PC-3 (cell line): ENCODE measurements at regions of chr4 and their contacts with region 1.

Region 1: GRCh38 chr4:185965426-185966384 is 103.3 kb upstream of the TLR3 start:
- DNase-seq: no peak
- ATAC-seq: no peak
- H3K4me3 ChIP-seq: no peak overlapping the region
- H3K27ac ChIP-seq: no peak overlapping the region
- H3K4me1 ChIP-seq: peaks cover 12% of the 10 kb centered on the region
- H3K27me3 ChIP-seq: no peaks in the 10 kb centered on the region
- CTCF ChIP-seq: no peak

Region 2: DNA sequence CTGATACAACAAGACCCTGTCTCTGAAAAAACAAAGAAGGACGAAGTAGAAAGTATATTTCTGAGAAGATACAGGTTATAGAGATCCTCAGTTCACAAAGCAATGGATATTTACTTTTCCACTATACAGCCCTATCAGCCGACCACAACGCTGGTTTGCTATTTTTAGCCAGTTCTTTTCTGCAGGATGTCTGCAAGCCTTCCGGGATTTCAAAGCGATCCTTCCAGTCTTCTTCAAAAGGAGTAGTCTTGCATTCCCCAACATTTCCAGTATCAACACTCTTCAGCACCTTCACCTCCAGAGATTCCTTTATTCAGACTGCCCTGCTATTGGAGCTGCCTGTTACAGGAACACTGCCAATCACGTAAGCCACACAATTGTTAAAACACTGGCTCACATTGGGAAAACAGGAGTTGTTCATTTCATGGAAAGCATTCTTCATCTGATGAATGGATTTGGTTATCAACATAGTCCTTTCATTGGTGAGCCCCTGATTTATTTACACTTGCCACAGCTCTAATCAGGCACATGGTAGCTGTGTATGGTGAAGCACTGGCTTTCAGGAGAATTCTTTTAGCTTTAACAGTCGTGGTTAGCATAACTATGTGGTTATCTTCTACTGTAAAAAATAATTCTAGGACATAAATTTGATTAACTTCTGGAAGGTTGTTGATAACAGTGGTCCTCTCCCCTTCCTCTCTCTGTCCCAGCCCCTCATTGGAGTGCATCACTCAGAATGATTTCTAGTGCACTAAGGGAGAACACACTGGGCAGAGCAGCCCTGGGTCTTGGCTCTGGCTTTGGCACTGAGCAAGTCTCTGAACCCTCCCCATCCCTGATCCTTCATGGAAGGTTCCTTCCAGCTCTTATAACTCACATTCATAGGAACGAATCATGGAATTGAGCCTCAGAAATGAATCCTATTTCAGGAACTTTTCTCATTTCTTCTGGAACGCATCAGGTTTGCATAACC is 43.8 kb before region 1 on chr4:
- CTCF ChIA-PET with region 1: no interaction called
- POLR2A ChIA-PET with region 1: no interaction called
- intact Hi-C with region 1: loop called (anchors 2 kb)
- DNase-seq: no peak
- ATAC-seq: no peak
- H3K4me3 ChIP-seq: no peak overlapping the region
- H3K27ac ChIP-seq: no peak overlapping the region
- H3K4me1 ChIP-seq: peaks cover 19% of the 10 kb centered on the region
- H3K27me3 ChIP-seq: no peaks in the 10 kb centered on the region
- CTCF ChIP-seq: no peak